WTC11 (cell line): ENCODE measurements at regions of chr7 and their contacts with region 1.

Region 1: DNA sequence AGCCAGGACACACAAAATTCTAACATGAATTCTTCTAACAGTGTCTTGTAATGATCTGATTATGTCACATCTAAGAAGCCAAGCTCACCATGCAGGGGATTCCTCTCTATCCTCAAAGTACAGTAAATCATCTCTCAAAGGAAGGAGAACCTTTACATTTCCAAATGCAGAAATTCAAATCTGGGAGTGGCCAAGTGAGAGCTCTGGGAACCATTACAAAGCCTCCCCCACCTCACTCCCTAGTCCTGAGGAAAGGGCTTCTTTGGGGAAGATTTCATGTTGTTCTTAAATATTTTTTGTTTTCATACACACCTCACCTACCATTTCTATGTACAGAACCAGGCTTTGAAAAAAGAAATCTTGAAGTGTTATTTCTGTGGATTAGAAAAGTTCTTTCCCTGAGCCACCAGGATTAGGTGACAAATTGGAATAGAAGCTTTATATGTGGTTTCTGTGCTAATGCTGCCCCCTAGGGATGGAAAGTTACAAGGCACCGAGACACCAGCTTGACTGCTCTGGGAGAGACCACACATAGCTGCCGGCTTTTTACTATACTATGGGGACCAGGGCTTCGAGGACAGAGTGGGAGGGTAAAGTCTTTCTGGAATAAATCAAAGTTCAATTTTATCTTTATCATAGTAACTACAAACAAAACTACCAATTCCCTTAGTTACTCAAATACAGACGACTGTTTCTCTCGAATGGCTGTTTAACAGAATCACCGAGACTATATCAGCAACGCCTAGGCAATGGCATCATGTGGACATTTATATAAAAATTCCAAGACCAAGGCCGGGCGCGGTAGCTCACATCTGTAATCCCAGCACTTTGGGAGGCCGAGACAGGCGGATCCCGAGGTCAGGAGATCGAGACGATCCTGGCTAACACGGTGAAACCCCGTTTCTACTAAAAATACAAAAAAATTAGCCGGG is 116.1 kb downstream of the RNF216 start:
- DNase-seq: peak; percentile 82
- ATAC-seq: peak; percentile 84
- H3K4me3 Mint-ChIP-seq: no peak overlapping the region
- H3K27ac Mint-ChIP-seq: peak overlapping the region; percentile 84
- H3K4me1 Mint-ChIP-seq: peaks cover 29% of the 10 kb centered on the region
- H3K27me3 Mint-ChIP-seq: no peaks in the 10 kb centered on the region
- CTCF ChIP-seq: peak; percentile 78

Region 2: DNA sequence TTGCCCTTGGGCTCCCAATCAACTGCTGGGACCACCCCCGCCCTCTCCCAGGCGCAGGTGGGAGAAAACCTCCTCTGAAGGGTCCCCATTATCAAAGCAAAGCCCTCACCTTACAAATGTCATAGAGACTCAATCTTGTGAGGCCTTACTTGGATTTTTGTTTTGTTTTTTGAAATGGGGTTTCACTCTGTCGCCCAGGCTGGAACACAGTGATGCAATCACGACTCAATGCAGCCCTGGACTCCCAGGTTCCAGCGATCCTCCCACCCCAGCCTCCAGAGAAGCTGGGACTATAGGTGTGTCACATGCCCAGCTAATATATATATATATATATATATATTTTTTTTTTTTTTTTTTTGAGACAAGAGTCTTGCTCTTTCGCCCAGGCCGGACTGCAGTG is 532.8 kb before region 1 on chr7:
- CTCF ChIA-PET with region 1: no interaction called
- POLR2A ChIA-PET with region 1: no interaction called
- DNase-seq: no peak
- ATAC-seq: no peak
- H3K4me3 Mint-ChIP-seq: no peak overlapping the region
- H3K27ac Mint-ChIP-seq: no peak overlapping the region
- H3K4me1 Mint-ChIP-seq: no peaks in the 10 kb centered on the region
- H3K27me3 Mint-ChIP-seq: no peaks in the 10 kb centered on the region
- CTCF ChIP-seq: no peak

Region 3: GRCh38 chr7:5462216-5462615 is 203.1 kb before region 1 on chr7:
- CTCF ChIA-PET with region 1: no interaction called
- POLR2A ChIA-PET with region 1: no interaction called
- DNase-seq: no peak
- ATAC-seq: no peak
- H3K4me3 Mint-ChIP-seq: no peak overlapping the region
- H3K27ac Mint-ChIP-seq: no peak overlapping the region
- H3K4me1 Mint-ChIP-seq: no peaks in the 10 kb centered on the region
- H3K27me3 Mint-ChIP-seq: no peaks in the 10 kb centered on the region; the same call in 1 of the 2 replicates
- CTCF ChIP-seq: no peak

Region 4: DNA sequence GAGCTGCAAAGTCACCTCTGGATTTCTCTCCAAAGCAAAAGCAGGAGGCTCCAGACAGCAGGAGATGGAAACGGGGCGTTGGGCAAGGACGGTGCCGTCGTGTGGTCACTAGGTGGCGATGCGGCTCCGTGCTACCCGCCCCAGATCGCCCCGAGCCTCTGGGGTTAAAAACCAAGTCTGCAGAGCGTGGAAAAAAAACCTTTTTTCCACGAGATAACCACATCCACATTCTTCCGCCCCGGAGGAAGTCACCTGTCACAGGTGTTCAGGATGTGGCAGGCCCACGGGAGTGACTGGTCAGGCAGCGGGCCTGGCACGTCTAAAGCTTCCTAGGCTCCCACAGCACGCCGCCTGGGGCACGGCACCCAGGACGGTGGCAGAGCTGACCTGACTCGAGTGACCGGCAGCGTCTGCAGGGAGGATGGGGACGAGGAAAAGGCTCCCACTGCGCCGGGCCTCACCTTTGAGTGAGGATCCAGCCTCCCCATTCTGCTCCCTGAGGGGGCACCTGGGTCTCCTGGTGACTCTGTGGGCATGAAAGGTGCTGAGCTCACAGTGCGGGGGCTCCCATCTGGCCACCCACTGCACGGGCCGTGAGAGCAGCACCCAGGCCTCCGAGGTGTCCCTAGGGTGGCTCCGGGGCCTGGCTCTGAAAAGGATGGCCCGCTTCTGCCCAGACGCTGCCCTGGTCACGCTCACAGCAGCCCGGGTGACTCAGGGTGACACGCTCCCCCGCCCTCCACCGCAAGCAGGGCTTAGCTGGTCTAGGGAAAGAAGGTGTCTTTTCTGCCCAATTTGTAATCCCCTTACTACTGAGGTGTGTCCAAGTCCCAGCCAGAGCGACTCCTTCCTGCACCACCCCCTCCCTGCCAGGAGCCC is 170.4 kb before region 1 on chr7:
- CTCF ChIA-PET with region 1: interaction called, 74 read pairs
- POLR2A ChIA-PET with region 1: no interaction called
- DNase-seq: peak; percentile 88
- ATAC-seq: peak; percentile 78
- H3K4me3 Mint-ChIP-seq: no peak overlapping the region
- H3K27ac Mint-ChIP-seq: no peak overlapping the region
- H3K4me1 Mint-ChIP-seq: peaks cover 17% of the 10 kb centered on the region
- H3K27me3 Mint-ChIP-seq: no peaks in the 10 kb centered on the region
- CTCF ChIP-seq: peak; percentile 57

Region 5: DNA sequence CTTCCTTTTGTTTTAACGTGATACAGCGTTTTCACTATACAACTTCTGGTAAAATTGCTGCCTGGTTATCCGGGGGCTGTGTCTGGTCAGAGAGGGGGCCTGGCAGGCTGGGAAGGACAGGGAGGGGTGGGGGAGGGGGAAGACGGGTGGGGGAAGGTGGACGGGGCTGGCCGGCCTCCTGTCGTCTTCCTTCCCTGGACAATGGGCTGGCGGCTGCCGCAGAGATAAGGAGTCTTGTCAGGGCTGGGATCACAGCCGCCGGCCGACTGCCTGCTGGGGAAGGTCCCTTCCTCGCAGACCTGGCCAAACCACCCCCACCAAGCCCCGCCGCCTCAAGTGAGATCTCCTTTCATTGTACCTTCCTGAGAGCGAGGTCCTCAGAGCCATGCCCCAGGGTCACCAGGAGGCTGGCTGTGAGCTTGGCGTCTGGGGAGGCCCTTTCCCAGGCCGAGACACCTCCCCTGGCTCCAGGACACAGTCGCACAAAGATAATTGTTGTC is 90.5 kb before region 1 on chr7:
- CTCF ChIA-PET with region 1: interaction called, 28 read pairs
- POLR2A ChIA-PET with region 1: no interaction called
- DNase-seq: peak; percentile 57
- ATAC-seq: peak; percentile 14
- H3K4me3 Mint-ChIP-seq: peak overlapping the region; percentile 49
- H3K27ac Mint-ChIP-seq: peak overlapping the region; percentile 33
- H3K4me1 Mint-ChIP-seq: peaks cover 27% of the 10 kb centered on the region
- H3K27me3 Mint-ChIP-seq: peaks cover 4% of the 10 kb centered on the region; the same call in 1 of the 2 replicates
- CTCF ChIP-seq: no peak

Region 6: GRCh38 chr7:5629941-5630340 is 35.4 kb before region 1 on chr7:
- CTCF ChIA-PET with region 1: interaction called, 68 read pairs
- POLR2A ChIA-PET with region 1: interaction called, 4 read pairs
- DNase-seq: no peak
- ATAC-seq: no peak
- H3K4me3 Mint-ChIP-seq: no peak overlapping the region
- H3K27ac Mint-ChIP-seq: 0 out of 2 replicates have a peak overlapping the region, but pooled peaks have one; percentile 82
- H3K4me1 Mint-ChIP-seq: peaks cover 62% of the 10 kb centered on the region
- H3K27me3 Mint-ChIP-seq: no peaks in the 10 kb centered on the region
- CTCF ChIP-seq: no peak

Region 7: GRCh38 chr7:5646852-5647251 is 18.5 kb before region 1 on chr7:
- CTCF ChIA-PET with region 1: interaction called, 11 read pairs
- POLR2A ChIA-PET with region 1: no interaction called
- DNase-seq: no peak
- ATAC-seq: no peak
- H3K4me3 Mint-ChIP-seq: no peak overlapping the region
- H3K27ac Mint-ChIP-seq: peak overlapping the region; percentile 78
- H3K4me1 Mint-ChIP-seq: peaks cover 13% of the 10 kb centered on the region
- H3K27me3 Mint-ChIP-seq: no peaks in the 10 kb centered on the region
- CTCF ChIP-seq: no peak

Region 8: GRCh38 chr7:5677538-5678294 is 12.4 kb after region 1 on chr7:
- CTCF ChIA-PET with region 1: interaction called, 126 read pairs
- POLR2A ChIA-PET with region 1: no interaction called
- DNase-seq: peak; percentile 75
- ATAC-seq: peak; percentile 76
- H3K4me3 Mint-ChIP-seq: no peak overlapping the region
- H3K27ac Mint-ChIP-seq: no peak overlapping the region
- H3K4me1 Mint-ChIP-seq: peaks cover 33% of the 10 kb centered on the region
- H3K27me3 Mint-ChIP-seq: no peaks in the 10 kb centered on the region
- CTCF ChIP-seq: peak; percentile 60